ENCODE measurements at regions of chr10 and their contacts with region 1.

Region 1: GRCh38 chr10:89369156-89370105 is 8.4 kb upstream of the IFIT1B start:
- DNase-seq: peak in 2 of 10 donors; percentile 45 to 57
- H3K4me3 ChIP-seq: peak overlapping the region in 15 of 59 donors; percentile 2 to 35 (median 14)
- H3K27ac ChIP-seq: peak overlapping the region; percentile 35 to 99 (median 87)
- H3K27me3 ChIP-seq: no peaks in the 10 kb centered on the region
- CTCF ChIP-seq: peak; percentile 10 to 77 (median 60)

Region 2: DNA sequence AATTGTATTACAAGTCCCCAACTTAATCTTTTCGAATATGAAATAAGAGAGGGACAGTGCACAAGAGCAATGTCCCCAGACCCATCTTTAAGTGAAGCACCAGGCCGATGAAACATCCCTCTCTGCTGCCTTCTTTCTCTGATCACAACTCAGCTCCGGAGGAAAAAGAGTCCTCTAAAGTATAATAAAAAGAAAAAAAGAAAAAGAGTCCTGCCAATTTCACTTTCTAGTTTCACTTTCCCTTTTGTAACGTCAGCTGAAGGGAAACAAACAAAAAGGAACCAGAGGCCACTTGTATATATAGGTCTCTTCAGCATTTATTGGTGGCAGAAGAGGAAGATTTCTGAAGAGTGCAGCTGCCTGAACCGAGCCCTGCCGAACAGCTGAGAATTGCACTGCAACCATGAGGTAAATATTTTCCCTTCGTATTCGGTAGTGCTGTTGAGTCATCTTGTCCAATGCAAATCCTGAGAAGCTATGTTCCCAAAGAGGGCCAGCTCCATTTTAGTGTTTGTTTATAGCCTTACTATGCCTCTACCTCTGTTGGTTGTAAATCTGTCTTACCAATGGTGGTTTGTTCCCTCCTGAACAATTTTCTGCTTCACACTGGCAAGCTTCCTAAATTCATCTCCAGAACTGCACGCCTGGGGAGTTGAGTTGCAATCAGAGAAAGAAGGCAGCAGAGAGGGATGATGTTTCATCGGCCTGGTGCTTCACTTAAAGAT is 67.5 kb before region 1 on chr10 and contains the start of gene IFIT2:
- intact Hi-C with region 1: loop called in 1 of 2 experiments (anchors 5 kb)
- DNase-seq: peak in 4 of 10 donors; percentile 23 to 53 (median 49)
- H3K4me3 ChIP-seq: peak within 1 kb of the TSS; percentile 42 to 78 (median 62)
- H3K27ac ChIP-seq: peak within 1 kb of the TSS; percentile 79 to 99 (median 97)
- H3K27me3 ChIP-seq: no peaks in the 10 kb centered on the region
- CTCF ChIP-seq: peak in 15 of 56 donors; percentile 6 to 26 (median 13)
- total RNA-seq, gene IFIT2: 7.7 to 52.2 (median 13.2) TPM

Region 3: DNA sequence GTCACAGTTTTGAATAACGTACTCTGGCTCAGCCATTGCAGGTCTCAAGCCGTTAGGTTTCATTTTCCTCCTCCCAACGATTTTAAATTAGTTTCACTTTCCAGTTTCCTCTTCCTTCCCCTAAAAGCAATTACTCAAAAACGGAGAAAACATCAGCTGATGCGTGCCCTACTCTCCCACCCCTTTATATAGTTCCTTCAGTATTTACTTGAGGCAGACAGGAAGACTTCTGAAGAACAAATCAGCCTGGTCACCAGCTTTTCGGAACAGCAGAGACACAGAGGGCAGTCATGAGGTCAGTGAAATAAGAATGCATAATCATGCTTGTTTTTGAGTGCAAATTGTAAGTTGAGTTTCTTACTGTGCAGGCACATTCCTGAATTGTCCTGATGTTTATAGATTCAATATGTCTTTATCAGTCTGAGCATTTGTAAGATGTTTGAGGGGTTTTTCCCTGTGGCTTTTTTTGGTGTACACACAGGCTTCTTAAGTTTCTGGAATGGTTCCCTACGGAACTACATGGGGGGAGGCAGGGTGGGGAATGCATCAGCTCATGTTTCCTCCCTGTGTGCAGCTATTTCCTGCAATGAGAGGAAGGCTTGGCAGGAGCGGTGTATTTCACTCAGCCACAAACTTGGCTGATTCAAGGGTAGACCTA is 41.5 kb before region 1 on chr10 and contains the start of gene IFIT3:
- intact Hi-C with region 1: loop called in 1 of 2 experiments (anchors 5 kb)
- DNase-seq: peak in 7 of 10 donors; percentile 51 to 68 (median 56)
- H3K4me3 ChIP-seq: peak within 1 kb of the TSS; percentile 18 to 75 (median 59)
- H3K27ac ChIP-seq: peak within 1 kb of the TSS; percentile 66 to 99 (median 94)
- H3K27me3 ChIP-seq: no peaks in the 10 kb centered on the region
- CTCF ChIP-seq: peak in 10 of 56 donors; percentile 7 to 22 (median 18)
- total RNA-seq, gene IFIT3: 8.6 to 195 (median 16.5) TPM

Region 4: DNA sequence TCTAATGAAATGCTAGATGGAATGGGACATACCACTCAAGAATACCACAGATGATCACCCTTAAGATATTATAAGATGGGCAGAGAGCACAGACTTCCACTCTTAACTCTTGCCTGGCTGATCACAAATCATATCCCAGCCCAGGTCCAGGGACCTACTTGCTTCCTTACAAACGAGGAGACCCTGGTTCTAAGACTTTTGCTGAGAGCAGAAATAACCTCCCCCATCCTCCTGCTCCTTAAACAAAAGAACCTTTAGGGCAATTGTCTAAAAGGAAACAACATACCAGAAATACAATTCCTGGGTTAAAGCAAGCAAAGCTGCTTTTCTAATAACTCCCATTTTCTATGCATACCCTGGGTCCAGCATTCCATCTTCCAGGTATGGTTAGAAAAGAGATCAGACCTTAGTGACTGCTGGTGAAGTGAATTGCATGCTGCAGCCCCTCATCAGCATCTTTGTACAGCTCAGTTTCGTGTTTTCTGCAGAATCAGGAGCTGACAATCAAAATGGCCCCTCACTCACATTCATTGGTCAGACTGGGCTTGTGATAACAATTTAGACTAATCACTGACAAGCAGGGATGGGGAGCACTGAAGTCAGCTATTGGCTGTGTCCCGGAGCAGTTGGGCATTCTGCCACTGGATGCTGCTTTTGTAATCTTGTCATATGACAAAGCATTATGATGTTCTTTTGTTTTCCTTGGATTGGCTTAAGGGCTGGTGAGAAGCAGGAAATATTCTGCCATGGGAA is 27.0 kb before region 1 on chr10:
- intact Hi-C with region 1: loop called in 1 of 2 experiments (anchors 1 kb)
- DNase-seq: peak; percentile 71 to 98 (median 90)
- H3K4me3 ChIP-seq: peak overlapping the region; percentile 30 to 84 (median 67)
- H3K27ac ChIP-seq: peak overlapping the region; percentile 78 to 99 (median 95)
- H3K27me3 ChIP-seq: no peaks in the 10 kb centered on the region
- CTCF ChIP-seq: peak in 7 of 56 donors; percentile 6 to 24 (median 18)

Region 5: DNA sequence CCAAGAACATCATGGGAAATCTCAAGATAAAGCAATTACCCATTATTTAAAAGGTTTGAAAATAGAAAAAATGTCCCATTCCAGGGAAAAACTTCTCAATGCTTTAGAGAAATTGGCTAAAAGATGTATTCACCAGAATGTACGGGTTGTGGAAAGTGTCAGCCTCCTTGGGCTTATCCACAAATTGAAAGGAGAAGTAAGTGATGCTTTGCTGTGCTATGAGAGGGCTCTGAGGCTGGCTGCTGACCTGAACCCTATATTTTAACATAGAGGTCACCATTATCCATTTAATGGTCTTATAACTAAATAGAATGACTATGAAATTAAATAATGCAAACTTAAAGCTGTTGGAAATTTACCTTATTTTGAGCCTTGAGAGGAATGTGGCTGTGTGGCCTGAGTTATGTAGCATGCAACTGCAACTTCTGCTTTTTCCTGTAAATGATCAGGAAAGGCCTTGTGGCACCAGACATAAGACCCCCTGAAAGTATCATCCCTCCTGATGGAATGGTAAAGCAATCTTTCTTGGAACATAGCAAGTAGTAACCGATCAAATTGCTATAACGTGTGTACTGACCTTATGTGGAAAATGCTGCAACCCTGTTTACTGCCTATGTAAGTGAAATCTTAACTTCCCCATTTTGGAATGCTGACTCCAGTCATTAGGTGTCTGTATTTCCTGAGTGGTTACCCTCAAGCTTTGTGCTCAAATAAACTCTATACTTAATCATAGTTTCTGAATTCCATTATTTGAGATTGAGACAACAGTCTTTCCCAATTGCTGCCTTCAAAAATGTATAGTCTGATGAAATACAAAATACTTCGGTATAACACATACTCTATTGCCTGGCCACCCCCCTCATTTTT is 15.3 kb after region 1 on chr10:
- intact Hi-C with region 1: no loop called
- DNase-seq: no peak
- H3K4me3 ChIP-seq: no peak overlapping the region
- H3K27ac ChIP-seq: peak overlapping the region in 8 of 59 donors; percentile 13 to 49 (median 23)
- H3K27me3 ChIP-seq: no peaks in the 10 kb centered on the region
- CTCF ChIP-seq: no peak

Measured in dorsolateral prefrontal cortex (tissue), 120 donors.